Naive thymus-derived CD4-positive, alpha-beta T cell (primary cell): ENCODE measurements at regions of chr15 and their contacts with region 1.

Region 1: DNA sequence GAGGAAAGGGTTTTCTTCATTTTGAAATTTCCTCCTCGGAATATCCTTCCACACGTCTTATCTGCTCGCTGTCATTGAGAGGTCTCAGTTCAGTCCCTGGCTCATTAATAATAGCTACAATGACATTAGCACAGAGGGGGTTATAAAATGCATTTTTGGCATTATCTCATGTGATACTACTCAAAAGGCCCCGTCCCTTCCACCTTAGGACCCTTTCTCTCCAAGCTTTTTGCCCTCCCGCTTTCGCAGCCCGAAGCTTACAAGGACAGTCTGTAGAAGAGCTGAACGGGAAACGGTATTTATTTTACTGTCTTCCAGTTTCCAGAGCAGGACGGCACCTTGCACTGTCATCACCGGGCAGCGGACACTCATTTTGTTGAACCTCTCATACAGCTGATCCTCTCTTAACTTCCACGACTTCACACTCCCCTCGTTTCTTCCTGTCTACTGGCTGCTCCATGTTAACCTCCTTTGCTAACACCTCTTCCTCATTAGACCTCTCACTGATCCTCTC is 5.6 kb upstream of the PLEKHO2 start:
- DNase-seq: no peak
- ATAC-seq: no peak
- H3K4me3 ChIP-seq: no peak overlapping the region
- H3K4me3 Mint-ChIP-seq: peak overlapping the region; percentile 16 to 80 (median 72)
- H3K27ac ChIP-seq: peak overlapping the region; percentile 38
- H3K27ac Mint-ChIP-seq: peak overlapping the region; percentile 44 to 91 (median 81)
- H3K4me1 ChIP-seq: peaks cover 37 to 43% of the 10 kb centered on the region in 2 donors
- H3K4me1 Mint-ChIP-seq: peaks cover 42 to 56% (median 52%) of the 10 kb centered on the region in 7 donors
- H3K27me3 ChIP-seq: no peaks in the 10 kb centered on the region
- H3K27me3 Mint-ChIP-seq: no peaks in the 10 kb centered on the region

Region 2: GRCh38 chr15:64809649-64810496 is 26.2 kb before region 1 on chr15:
- CTCF ChIA-PET with region 1: interaction called, 6 read pairs
- POLR2A ChIA-PET with region 1: no interaction called
- intact Hi-C with region 1: loop called in 1 of 2 experiments (anchors 1 kb)
- DNase-seq: peak; percentile 21 to 75 (median 47)
- ATAC-seq: peak; percentile 80
- H3K4me3 ChIP-seq: no peak overlapping the region
- H3K4me3 Mint-ChIP-seq: no peak overlapping the region
- H3K27ac ChIP-seq: no peak overlapping the region
- H3K27ac Mint-ChIP-seq: no peak overlapping the region
- H3K4me1 ChIP-seq: peaks cover 0 to 3% of the 10 kb centered on the region in 2 donors
- H3K4me1 Mint-ChIP-seq: peaks cover 0 to 8% (median 4%) of the 10 kb centered on the region in 7 donors
- H3K27me3 ChIP-seq: no peaks in the 10 kb centered on the region
- H3K27me3 Mint-ChIP-seq: peaks cover 0 to 12% (median 0%) of the 10 kb centered on the region in 5 donors

Region 3: GRCh38 chr15:64825431-64826294 is 10.4 kb before region 1 on chr15 and contains the start of gene PIF1:
- CTCF ChIA-PET with region 1: interaction called, 13 read pairs
- POLR2A ChIA-PET with region 1: interaction called, 6 read pairs
- intact Hi-C with region 1: loop called (anchors 1 kb)
- DNase-seq: peak; percentile 44 to 92 (median 87)
- ATAC-seq: peak; percentile 99
- H3K4me3 ChIP-seq: peak within 1 kb of the TSS; percentile 71
- H3K4me3 Mint-ChIP-seq: peak within 1 kb of the TSS; percentile 82 to 95 (median 88)
- H3K27ac ChIP-seq: peak within 1 kb of the TSS; percentile 37
- H3K27ac Mint-ChIP-seq: peak within 1 kb of the TSS in 8 of 9 donors; percentile 41 to 91 (median 75)
- H3K4me1 ChIP-seq: peaks cover 21 to 24% of the 10 kb centered on the region in 2 donors
- H3K4me1 Mint-ChIP-seq: peaks cover 25 to 42% (median 35%) of the 10 kb centered on the region in 7 donors
- H3K27me3 ChIP-seq: peaks cover 0 to 4% of the 10 kb centered on the region in 2 donors
- H3K27me3 Mint-ChIP-seq: peaks cover 0 to 19% (median 12%) of the 10 kb centered on the region in 5 donors
- total RNA-seq, gene PIF1: 0.34 to 30.2 (median 1.0) TPM in 3 of 5 experiments, not detected in the others

Region 4: GRCh38 chr15:65077981-65078352 is 241.9 kb after region 1 on chr15:
- CTCF ChIA-PET with region 1: no interaction called
- POLR2A ChIA-PET with region 1: no interaction called
- intact Hi-C with region 1: no loop called
- DNase-seq: peak in 8 of 9 donors; percentile 18 to 54 (median 39)
- ATAC-seq: peak; percentile 74
- H3K4me3 ChIP-seq: no peak overlapping the region
- H3K4me3 Mint-ChIP-seq: peak overlapping the region in 7 of 10 donors; percentile 11 to 80 (median 52)
- H3K27ac ChIP-seq: no peak overlapping the region
- H3K27ac Mint-ChIP-seq: peak overlapping the region in 1 of 9 donors; percentile 74
- H3K4me1 ChIP-seq: peaks cover 0 to 11% of the 10 kb centered on the region in 2 donors
- H3K4me1 Mint-ChIP-seq: peaks cover 13 to 25% (median 19%) of the 10 kb centered on the region in 7 donors
- H3K27me3 ChIP-seq: no peaks in the 10 kb centered on the region
- H3K27me3 Mint-ChIP-seq: peaks cover 16 to 35% (median 32%) of the 10 kb centered on the region in 5 donors

Region 5: DNA sequence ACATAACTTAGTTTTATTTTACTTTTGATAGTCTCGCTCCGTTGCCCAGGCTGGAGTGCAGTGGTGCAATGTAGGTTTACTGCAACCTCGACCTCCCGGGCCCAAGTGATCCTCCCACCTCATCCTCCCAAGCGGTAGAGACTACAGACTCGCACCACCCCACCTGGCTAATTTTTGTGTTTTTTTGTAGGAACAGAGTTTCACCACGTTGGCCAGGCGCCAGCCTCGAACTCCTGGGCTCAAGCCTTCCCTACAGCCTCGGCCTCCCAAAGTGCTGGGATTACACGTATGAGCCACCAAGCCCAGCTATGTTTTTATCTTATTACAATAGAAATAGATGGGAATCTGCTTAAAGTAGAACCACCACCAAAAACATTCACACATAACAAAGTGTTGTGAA is 462.7 kb after region 1 on chr15:
- CTCF ChIA-PET with region 1: no interaction called
- POLR2A ChIA-PET with region 1: no interaction called
- intact Hi-C with region 1: loop called in 1 of 2 experiments (anchors 5 kb)
- DNase-seq: no peak
- ATAC-seq: no peak
- H3K4me3 ChIP-seq: no peak overlapping the region
- H3K4me3 Mint-ChIP-seq: peak overlapping the region; percentile 64 to 97 (median 84)
- H3K27ac ChIP-seq: peak overlapping the region; percentile 54
- H3K27ac Mint-ChIP-seq: peak overlapping the region; percentile 10 to 95 (median 78)
- H3K4me1 ChIP-seq: peaks cover 17 to 20% of the 10 kb centered on the region in 2 donors
- H3K4me1 Mint-ChIP-seq: peaks cover 12 to 42% (median 34%) of the 10 kb centered on the region in 7 donors
- H3K27me3 ChIP-seq: no peaks in the 10 kb centered on the region
- H3K27me3 Mint-ChIP-seq: peaks cover 0 to 2% (median 0%) of the 10 kb centered on the region in 5 donors